ENCODE measurements at regions of chr6 and their contacts with region 1.

Region 1: DNA sequence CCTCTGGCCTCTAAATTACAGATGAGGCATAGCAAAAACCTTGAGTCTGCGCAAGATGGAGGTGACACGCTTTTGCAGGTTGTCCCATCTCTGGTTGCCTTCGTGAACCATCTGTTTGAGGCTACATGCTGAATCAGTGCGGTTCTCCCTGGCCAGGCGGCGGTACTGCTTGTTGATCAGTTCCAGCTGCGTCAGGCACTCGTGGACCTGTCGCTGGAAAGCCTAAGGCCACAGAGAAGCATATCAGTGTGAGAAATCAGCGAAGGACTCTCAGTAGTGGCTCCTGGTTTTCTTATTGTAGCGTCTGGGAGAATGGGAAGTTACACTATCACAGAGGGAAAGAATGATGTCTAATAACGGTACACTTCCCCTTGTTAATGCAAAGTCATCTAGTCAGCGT is 344.4 kb downstream of the ESR1 start:
- DNase-seq: no peak
- ATAC-seq: no peak

Region 2: DNA sequence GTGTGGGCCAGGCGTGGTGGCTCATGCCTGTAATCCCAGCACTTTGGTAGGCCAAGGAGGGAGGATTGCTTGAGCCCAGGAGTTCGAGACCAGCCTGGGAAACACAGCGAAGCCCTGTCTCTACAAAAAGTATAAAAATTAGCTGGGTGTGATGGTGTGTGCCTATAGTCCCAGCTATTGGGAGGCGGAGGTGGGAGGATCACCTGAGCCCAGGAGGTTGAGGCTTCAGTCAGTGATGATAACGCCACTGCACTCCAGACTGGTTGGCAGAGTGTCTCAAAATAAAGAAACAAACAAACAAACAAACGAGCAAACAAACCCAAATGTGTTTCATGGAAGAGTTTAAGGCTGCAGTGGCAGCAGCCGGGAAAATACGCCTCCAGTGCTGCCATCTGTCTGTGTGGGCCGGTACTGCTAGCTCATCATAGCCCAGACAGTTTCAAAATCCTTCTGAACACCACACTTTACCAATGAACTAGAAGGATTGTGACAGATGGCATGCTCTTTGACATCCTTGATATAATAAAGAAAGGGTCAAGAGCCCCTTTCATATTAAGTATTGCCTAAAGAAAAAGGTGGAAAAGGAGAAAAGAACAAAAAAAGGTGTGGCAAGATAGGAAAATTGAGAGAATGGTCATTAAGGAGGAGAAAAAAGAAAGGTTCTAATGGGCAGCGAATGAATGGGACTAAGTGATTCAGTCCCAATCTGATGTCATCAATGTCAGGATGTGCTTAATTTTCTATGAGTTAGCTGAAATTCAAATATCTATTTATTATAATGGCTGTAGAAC is 186.6 kb after region 1 on chr6:
- intact Hi-C with region 1: loop called (anchors 10 kb)
- DNase-seq: peak; percentile 68
- ATAC-seq: peak; percentile 81